GM18951 (cell line): ENCODE measurements at regions of chr18 and their contacts with region 1.

Region 1: GRCh38 chr18:31563778-31564177 is 27.9 kb upstream of the TTR start:
- POLR2A ChIP-seq: no peak

Region 2: GRCh38 chr18:31710826-31711225 is 147.0 kb after region 1 on chr18:
- in situ Hi-C with region 1: loop called (anchors 10 kb)
- POLR2A ChIP-seq: no peak

Region 3: DNA sequence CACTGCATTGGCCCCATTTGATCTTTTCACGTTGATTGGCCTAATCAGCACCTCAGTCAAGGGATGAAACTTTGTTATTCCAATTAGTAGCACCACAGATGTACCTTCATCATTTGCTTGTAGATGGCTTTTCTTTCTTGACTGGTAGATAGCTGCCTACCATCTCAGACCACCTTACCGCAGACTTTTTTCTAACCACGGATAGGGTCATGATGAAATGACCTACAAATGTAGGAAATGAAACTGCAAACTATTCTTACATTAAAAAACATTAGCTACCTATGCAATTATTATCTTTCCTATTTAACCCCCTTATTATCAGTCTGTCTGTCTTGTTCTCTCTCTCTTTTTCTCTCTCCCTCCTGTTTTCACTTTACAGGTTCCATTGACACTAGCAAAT is 219.3 kb after region 1 on chr18:
- in situ Hi-C with region 1: no loop called
- POLR2A ChIP-seq: no peak

Region 4: DNA sequence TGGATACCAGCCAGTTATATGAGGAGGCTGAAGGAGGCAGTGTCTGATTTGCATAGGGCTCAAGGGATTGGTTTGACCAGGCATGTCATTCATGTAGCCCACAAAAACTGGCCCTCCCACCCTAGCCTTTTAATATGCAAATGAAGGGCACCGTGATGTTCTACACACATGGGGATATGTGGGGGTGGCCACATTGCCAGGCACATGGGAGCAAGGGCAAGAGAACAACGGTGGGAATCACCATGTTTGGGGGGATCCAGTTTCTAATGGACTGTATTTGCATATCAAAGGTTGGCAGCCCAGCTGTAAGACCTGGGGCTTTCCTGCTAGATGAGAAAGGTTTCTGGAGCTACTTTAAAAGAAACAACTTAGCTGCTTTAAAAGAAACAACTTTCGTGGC is 262.0 kb after region 1 on chr18:
- in situ Hi-C with region 1: loop called (anchors 5 kb)
- POLR2A ChIP-seq: no peak

Region 5: GRCh38 chr18:31942999-31943865 is 379.5 kb after region 1 on chr18 and contains the start of gene TRAPPC8:
- in situ Hi-C with region 1: no loop called
- POLR2A ChIP-seq: peak; percentile 84